H1 (cell line): ENCODE measurements at regions of chr4 and their contacts with region 1.

Region 1: GRCh38 chr4:75724066-75724866 is at the start of gene USO1:
- DNase-seq: peak; percentile 97 to 100
- H3K4me3 ChIP-seq: peak within 1 kb of the TSS; percentile 80 to 98 (median 90)
- H3K27ac ChIP-seq: peak within 1 kb of the TSS; percentile 98
- H3K4me1 ChIP-seq: peaks cover 0 to 9% (median 2%) of the 10 kb centered on the region in 4 experiments; a peak in 6 of 7 replicates
- H3K27me3 ChIP-seq: no peaks in the 10 kb centered on the region
- CTCF ChIP-seq: peak in 2 of 3 experiments; percentile 77 to 85; a peak in 3 of 4 replicates
- EP300 ChIP-seq: no peak
- POLR2A ChIP-seq: peak; percentile 94 to 97
- RAD21 ChIP-seq: peak; percentile 64 to 73
- total RNA-seq, gene USO1: 190 and 198 TPM in 2 replicates

Region 2: GRCh38 chr4:75565481-75565880 is 158.8 kb before region 1 on chr4:
- CTCF ChIA-PET with region 1: no interaction called
- POLR2A ChIA-PET with region 1: no interaction called
- DNase-seq: no peak
- H3K4me3 ChIP-seq: no peak overlapping the region
- H3K27ac ChIP-seq: no peak overlapping the region
- H3K4me1 ChIP-seq: peaks cover 0 to 5% (median 3%) of the 10 kb centered on the region in 4 experiments; a peak in 2 of 7 replicates
- H3K27me3 ChIP-seq: no peaks in the 10 kb centered on the region
- CTCF ChIP-seq: no peak
- EP300 ChIP-seq: no peak
- POLR2A ChIP-seq: no peak
- RAD21 ChIP-seq: no peak

Region 3: DNA sequence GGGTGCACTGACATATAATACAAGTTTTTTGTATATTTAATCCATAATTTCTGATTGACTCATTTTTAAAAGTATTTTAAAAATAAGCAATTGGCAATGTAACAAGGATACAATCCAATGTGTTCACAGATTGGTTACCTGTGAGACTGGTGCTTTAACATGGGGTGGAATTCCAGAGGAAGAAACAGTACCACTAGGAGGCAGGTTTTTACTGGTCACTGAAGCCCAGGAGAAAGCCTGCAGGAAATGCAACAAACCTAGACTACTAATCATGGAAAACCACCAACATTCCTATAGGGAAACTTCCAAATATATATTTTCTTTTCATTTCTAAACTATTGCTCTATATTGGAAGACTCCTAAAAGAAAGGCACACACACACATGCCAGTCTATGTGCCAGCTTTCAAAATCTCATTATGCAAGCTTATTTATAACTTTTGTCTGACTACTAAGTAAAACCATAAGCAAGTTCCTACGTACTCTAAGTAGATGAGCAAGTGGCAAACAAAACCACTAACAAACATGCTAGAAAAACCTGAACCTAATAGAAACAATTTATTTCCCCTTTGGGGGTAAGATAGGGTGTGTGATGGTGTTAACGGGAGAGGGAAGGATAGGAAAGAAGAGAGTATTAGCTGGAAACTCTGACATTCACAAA is 70.3 kb before region 1 on chr4:
- CTCF ChIA-PET with region 1: interaction called, 35 read pairs
- POLR2A ChIA-PET with region 1: interaction called, 9 read pairs
- DNase-seq: no peak
- H3K4me3 ChIP-seq: no peak overlapping the region
- H3K27ac ChIP-seq: no peak overlapping the region
- H3K4me1 ChIP-seq: no peaks in the 10 kb centered on the region
- H3K27me3 ChIP-seq: no peaks in the 10 kb centered on the region
- CTCF ChIP-seq: peak in 2 of 3 experiments; percentile 61 to 69; a peak in 3 of 4 replicates
- EP300 ChIP-seq: no peak
- POLR2A ChIP-seq: no peak
- RAD21 ChIP-seq: peak; percentile 73 to 77

Region 4: DNA sequence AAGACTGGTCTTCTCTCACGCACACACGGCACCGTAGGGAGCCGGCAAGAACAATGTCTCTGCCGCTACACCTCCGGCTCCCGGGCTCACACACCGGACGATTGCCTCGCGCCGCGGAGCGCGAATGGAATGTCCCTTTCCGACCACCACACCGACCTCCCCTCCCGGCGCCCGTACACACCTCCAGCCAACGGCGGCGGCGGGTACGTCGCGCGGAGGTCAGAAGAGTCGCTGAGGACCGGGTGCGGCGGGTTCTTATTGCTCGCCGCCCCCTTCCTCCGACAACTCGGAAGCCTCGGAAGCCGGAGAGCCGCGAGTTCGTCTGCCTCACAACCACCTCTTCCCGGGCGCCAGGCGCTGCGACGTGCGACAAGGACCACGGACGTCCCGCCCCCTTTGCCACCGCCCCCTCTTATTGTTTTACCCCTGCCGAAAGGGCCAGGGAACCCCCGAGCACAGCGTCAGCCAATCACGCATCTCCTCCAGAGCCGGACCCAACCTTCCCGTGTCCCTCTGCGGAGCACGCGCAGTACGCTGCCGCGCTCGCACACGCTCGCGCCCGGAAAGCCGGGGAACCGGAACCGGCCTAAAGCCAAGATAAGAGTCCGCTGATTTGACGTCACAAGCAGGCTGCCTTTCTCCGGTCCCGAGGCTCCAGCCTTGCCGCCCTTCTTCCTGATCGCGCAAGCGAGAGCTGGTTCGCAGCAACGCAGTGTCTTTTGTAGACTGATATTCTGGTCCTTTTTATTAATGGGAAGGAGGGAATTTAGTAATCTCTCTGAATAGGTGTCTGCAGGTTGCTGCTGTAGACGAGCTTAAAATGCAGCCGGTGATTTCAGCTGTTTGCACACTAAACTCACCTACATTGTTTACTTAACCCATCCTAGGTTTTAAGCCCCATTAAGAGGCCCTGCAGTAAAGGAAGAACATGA is 51.0 kb before region 1 on chr4 and contains the start of gene G3BP2:
- CTCF ChIA-PET with region 1: interaction called, 36 read pairs
- POLR2A ChIA-PET with region 1: interaction called, 117 read pairs
- DNase-seq: peak; percentile 93 to 97
- H3K4me3 ChIP-seq: peak within 1 kb of the TSS; percentile 92 to 99 (median 94)
- H3K27ac ChIP-seq: peak within 1 kb of the TSS; percentile 94
- H3K4me1 ChIP-seq: peaks cover 6 to 11% (median 7%) of the 10 kb centered on the region in 4 experiments
- H3K27me3 ChIP-seq: no peaks in the 10 kb centered on the region
- CTCF ChIP-seq: no peak
- EP300 ChIP-seq: no peak
- POLR2A ChIP-seq: peak; percentile 75 to 95
- RAD21 ChIP-seq: no peak
- total RNA-seq, gene G3BP2: 378 and 388 TPM in 2 replicates

Region 5: GRCh38 chr4:75708218-75708691 is 16.0 kb before region 1 on chr4:
- CTCF ChIA-PET with region 1: interaction called, 78 read pairs
- POLR2A ChIA-PET with region 1: interaction called, 67 read pairs
- DNase-seq: peak in 1 of 2 experiments; percentile 50
- H3K4me3 ChIP-seq: no peak overlapping the region
- H3K27ac ChIP-seq: peak overlapping the region; percentile 8; the same call in 1 of the 2 replicates
- H3K4me1 ChIP-seq: peaks cover 8 to 16% (median 12%) of the 10 kb centered on the region in 4 experiments; a peak in 6 of 7 replicates
- H3K27me3 ChIP-seq: no peaks in the 10 kb centered on the region
- CTCF ChIP-seq: peak in 2 of 3 experiments; percentile 63 to 75; a peak in 3 of 4 replicates
- EP300 ChIP-seq: no peak
- POLR2A ChIP-seq: no peak
- RAD21 ChIP-seq: peak; percentile 74 to 78

Region 6: GRCh38 chr4:75745161-75745560 is 20.9 kb after region 1 on chr4:
- CTCF ChIA-PET with region 1: interaction called, 4 read pairs
- POLR2A ChIA-PET with region 1: interaction called, 10 read pairs
- DNase-seq: no peak
- H3K4me3 ChIP-seq: no peak overlapping the region
- H3K27ac ChIP-seq: no peak overlapping the region
- H3K4me1 ChIP-seq: no peaks in the 10 kb centered on the region
- H3K27me3 ChIP-seq: no peaks in the 10 kb centered on the region
- CTCF ChIP-seq: no peak
- EP300 ChIP-seq: no peak
- POLR2A ChIP-seq: no peak
- RAD21 ChIP-seq: no peak